ENCODE measurements at regions of chr3 and their contacts with region 1.

Region 1: GRCh38 chr3:122383771-122384697 is at the start of gene FAM162A:
- DNase-seq: peak; percentile 97
- ATAC-seq: peak; percentile 91
- H3K4me3 Mint-ChIP-seq: peak within 1 kb of the TSS; percentile 92
- H3K27ac Mint-ChIP-seq: peak within 1 kb of the TSS; percentile 98
- H3K4me1 Mint-ChIP-seq: peaks cover 66% of the 10 kb centered on the region
- H3K27me3 Mint-ChIP-seq: no peaks in the 10 kb centered on the region
- total RNA-seq, gene FAM162A: 163 to 181 TPM

Region 2: GRCh38 chr3:121660356-121661171 is 723.5 kb before region 1 on chr3 and contains the start of gene HCLS1:
- CTCF ChIA-PET with region 1: no interaction called
- POLR2A ChIA-PET with region 1: no interaction called
- intact Hi-C with region 1: loop called in 1 of 2 experiments (anchors 1 kb)
- DNase-seq: peak; percentile 83
- ATAC-seq: peak; percentile 88
- H3K4me3 Mint-ChIP-seq: peak within 1 kb of the TSS; percentile 95
- H3K27ac Mint-ChIP-seq: peak within 1 kb of the TSS; percentile 97
- H3K4me1 Mint-ChIP-seq: peaks cover 50% of the 10 kb centered on the region
- H3K27me3 Mint-ChIP-seq: no peaks in the 10 kb centered on the region
- total RNA-seq, gene HCLS1: 200 to 235 TPM

Region 3: DNA sequence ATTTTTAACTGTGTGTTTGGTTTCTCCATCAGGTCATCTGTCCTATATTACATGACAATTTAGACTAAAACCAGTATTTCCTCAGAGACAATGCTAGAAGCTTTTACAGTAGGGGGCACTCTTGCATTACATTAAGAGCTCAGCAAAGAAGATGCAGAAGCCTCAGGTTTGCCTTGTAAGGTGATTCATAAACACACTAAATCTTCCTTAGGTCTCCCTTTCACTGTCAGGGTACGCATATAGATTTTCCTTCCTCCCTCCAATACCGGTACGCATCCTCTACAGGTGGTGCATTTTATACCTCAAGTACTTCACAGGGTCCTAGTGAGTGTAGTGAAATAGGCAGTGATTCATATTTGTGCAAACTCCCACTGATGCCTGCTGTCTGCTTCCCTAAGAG is 282.4 kb before region 1 on chr3:
- CTCF ChIA-PET with region 1: interaction called, 7 read pairs
- POLR2A ChIA-PET with region 1: no interaction called
- intact Hi-C with region 1: loop called (anchors 1 kb)
- DNase-seq: no peak
- ATAC-seq: peak; percentile 54
- H3K4me3 Mint-ChIP-seq: peak overlapping the region; percentile 60
- H3K27ac Mint-ChIP-seq: peak overlapping the region; percentile 79
- H3K4me1 Mint-ChIP-seq: peaks cover 42% of the 10 kb centered on the region
- H3K27me3 Mint-ChIP-seq: no peaks in the 10 kb centered on the region

Region 4: DNA sequence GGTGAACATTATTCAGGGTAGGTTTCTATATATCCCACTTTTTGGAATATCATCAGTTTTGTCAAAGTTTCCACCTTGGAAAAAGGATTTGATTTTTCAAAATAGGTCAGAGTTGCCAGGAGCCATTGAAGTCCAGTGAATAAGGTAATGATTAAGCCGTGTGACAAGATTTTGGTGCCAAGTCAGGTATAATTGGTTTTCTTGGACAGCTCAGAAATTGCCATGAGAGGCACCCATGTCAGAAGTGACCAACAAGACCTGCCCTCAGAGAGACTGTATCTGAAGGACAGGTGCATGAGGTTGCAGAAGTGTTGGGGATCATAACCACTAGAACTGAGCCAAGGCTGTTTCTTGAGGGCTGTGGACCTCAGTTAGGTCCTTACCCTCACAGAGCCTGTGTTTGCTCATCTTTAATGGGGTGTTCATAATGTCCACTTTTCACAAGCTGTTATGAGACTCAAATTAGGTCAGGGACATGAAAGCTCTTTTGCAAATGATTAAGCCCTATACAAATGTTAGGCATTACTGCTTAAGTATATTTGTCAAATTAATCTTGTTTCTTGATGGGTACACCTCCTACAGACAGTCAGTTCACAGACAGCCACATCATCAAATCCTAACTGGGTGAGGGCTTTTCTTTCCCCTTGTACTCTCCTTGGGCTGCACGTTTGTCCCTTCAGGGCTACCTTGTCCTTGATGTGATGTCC is 168.3 kb before region 1 on chr3:
- CTCF ChIA-PET with region 1: no interaction called
- POLR2A ChIA-PET with region 1: no interaction called
- intact Hi-C with region 1: no loop called
- DNase-seq: no peak
- ATAC-seq: no peak
- H3K4me3 Mint-ChIP-seq: no peak overlapping the region
- H3K27ac Mint-ChIP-seq: no peak overlapping the region
- H3K4me1 Mint-ChIP-seq: no peaks in the 10 kb centered on the region
- H3K27me3 Mint-ChIP-seq: peaks cover 17% of the 10 kb centered on the region

Region 5: GRCh38 chr3:122415720-122416654 is 32.0 kb after region 1 on chr3 and contains the start of gene WDR5B:
- CTCF ChIA-PET with region 1: interaction called, 7 read pairs
- POLR2A ChIA-PET with region 1: interaction called, 19 read pairs
- intact Hi-C with region 1: loop called (anchors 1 kb)
- DNase-seq: peak; percentile 99
- ATAC-seq: peak; percentile 91
- H3K4me3 Mint-ChIP-seq: peak within 1 kb of the TSS; percentile 96
- H3K27ac Mint-ChIP-seq: peak within 1 kb of the TSS; percentile 96
- H3K4me1 Mint-ChIP-seq: peaks cover 46% of the 10 kb centered on the region
- H3K27me3 Mint-ChIP-seq: no peaks in the 10 kb centered on the region
- total RNA-seq, gene WDR5B: 2.6 to 2.8 TPM

Region 6: DNA sequence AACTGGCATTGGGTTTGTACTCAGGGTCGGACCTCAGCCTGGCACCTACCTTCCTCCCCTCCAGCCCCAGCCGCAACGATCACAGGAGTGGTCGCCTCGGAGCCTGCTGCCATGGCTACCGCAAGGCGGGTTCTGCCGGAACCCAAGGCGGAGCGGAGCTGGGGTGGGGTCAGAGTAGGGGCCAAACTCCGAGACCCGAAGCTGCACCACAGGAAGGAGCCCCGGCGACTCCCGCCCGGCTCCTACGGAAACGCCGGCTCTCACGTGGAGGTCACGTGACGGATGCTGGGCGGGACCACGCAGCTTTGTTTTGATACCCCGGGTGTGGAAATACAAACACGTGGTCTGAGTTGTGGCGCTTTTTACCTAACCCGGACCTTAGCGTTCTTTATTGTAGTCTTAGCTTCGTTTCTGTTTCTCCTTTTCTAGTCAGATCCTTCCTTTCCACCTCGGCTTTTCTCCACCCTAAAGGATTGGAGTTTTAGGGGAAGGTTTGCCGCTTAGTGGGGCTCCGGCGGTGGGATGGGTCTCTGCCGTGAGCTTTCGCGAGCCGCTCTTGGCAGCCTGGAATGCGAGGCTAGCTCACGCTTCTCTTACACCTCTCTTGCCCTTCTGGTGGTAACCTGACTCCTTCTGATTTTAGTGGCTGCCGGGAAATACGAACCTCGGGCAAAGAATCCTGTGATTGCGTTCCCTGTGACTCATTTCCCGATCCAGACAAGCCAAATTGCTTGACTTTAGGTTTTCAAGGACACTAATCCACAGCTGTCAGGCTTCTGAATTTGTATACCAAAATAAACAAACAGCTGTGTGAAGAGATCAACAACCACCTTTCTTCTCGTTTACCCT is 409.8 kb after region 1 on chr3 and contains the start of gene HSPBAP1:
- CTCF ChIA-PET with region 1: no interaction called
- POLR2A ChIA-PET with region 1: no interaction called
- intact Hi-C with region 1: loop called (anchors 1 to 10 kb)
- DNase-seq: peak; percentile 93
- ATAC-seq: peak; percentile 67
- H3K4me3 Mint-ChIP-seq: no peak within 1 kb of the TSS
- H3K27ac Mint-ChIP-seq: peak within 1 kb of the TSS; percentile 86
- H3K4me1 Mint-ChIP-seq: peaks cover 32% of the 10 kb centered on the region
- H3K27me3 Mint-ChIP-seq: no peaks in the 10 kb centered on the region
- total RNA-seq, gene HSPBAP1: 3.9 to 4.4 TPM